ENCODE measurements at regions of chr1 and their contacts with region 1.

Region 1: GRCh38 chr1:145858894-145859490 is at the start of gene PIAS3:
- DNase-seq: peak; percentile 97
- H3K4me3 ChIP-seq: peak within 1 kb of the TSS; percentile 64 to 78 (median 71)
- H3K27ac ChIP-seq: peak within 1 kb of the TSS; percentile 43
- H3K4me1 ChIP-seq: peaks cover 7% of the 10 kb centered on the region
- H3K27me3 ChIP-seq: peaks cover 2 to 4% of the 10 kb centered on the region in 2 experiments
- CTCF ChIP-seq: no peak
- POLR2A ChIP-seq: no peak
- total RNA-seq, gene PIAS3: 50.1 and 53.3 TPM in 2 replicates

Region 2: GRCh38 chr1:145871994-145872924 is 13.3 kb after region 1 on chr1:
- CTCF ChIA-PET with region 1: interaction called, 11 read pairs
- POLR2A ChIA-PET with region 1: no interaction called
- dilution Hi-C with region 1: no loop called
- intact Hi-C with region 1: no loop called
- DNase-seq: peak; percentile 37
- H3K4me3 ChIP-seq: peak overlapping the region in 1 of 3 experiments; percentile 35
- H3K27ac ChIP-seq: no peak overlapping the region
- H3K4me1 ChIP-seq: peaks cover 8% of the 10 kb centered on the region
- H3K27me3 ChIP-seq: peaks cover 0 to 3% of the 10 kb centered on the region in 2 experiments
- CTCF ChIP-seq: no peak
- POLR2A ChIP-seq: no peak

Region 3: DNA sequence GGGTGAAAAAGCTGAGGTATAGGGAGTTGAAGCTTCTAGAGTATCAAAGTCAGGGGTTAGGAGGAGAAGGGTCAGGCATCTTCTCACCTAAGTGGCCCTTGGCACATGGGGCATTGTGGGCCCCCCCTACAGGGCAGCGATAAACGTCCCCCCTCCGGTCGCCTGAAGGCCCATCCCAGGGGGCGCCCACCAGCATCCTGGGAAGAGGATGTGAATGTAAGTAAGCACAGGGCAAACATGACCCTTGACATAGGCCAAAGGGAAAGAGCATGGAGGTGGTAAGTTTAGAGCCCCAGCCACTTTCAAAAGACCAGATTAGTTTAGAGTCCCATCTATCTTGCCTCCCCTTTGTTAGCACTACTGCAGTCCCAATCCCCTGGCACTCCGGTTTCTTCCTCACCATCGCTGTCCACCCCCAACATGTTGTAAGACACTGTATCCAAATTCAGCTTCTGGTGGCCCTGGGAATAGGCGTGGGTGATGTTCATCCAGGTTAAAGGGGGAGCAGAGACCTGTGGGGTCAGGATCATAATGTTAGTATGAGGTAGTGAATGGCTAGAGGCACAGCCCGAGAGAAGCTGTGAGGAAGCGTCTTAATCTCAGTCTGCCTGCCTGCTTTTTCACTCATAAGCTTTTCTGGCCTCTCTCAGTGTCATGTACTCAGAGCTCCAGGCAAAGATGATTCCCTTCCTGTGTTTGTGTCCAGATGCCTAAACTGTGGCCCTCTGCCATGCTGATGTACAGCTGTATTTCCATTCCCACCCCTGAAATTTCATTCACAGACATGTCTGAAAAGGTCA is 48.2 kb after region 1 on chr1:
- CTCF ChIA-PET with region 1: interaction called, 17 read pairs
- POLR2A ChIA-PET with region 1: interaction called, 9 read pairs
- dilution Hi-C with region 1: no loop called
- intact Hi-C with region 1: no loop called
- DNase-seq: peak; percentile 59
- H3K4me3 ChIP-seq: no peak overlapping the region
- H3K27ac ChIP-seq: peak overlapping the region; percentile 39
- H3K4me1 ChIP-seq: peaks cover 25% of the 10 kb centered on the region
- H3K27me3 ChIP-seq: no peaks in the 10 kb centered on the region
- CTCF ChIP-seq: no peak
- POLR2A ChIP-seq: no peak

Region 4: GRCh38 chr1:145927063-145927886 is 68.3 kb after region 1 on chr1 and contains the start of gene RBM8A:
- CTCF ChIA-PET with region 1: interaction called, 5 read pairs
- POLR2A ChIA-PET with region 1: interaction called, 10 read pairs
- dilution Hi-C with region 1: no loop called
- intact Hi-C with region 1: no loop called
- DNase-seq: peak; percentile 99
- H3K4me3 ChIP-seq: peak within 1 kb of the TSS; percentile 80 to 89 (median 80)
- H3K27ac ChIP-seq: peak within 1 kb of the TSS; percentile 94
- H3K4me1 ChIP-seq: peaks cover 8% of the 10 kb centered on the region
- H3K27me3 ChIP-seq: no peaks in the 10 kb centered on the region
- CTCF ChIP-seq: peak; percentile 64 to 70
- POLR2A ChIP-seq: peak; percentile 88
- total RNA-seq, gene RBM8A: 194 and 200 TPM in 2 replicates

Region 5: GRCh38 chr1:145963995-145964901 is 105.3 kb after region 1 on chr1 and contains the starts of genes ANKRD34A and POLR3GL:
- CTCF ChIA-PET with region 1: interaction called, 10 read pairs
- POLR2A ChIA-PET with region 1: interaction called, 10 read pairs
- dilution Hi-C with region 1: no loop called
- intact Hi-C with region 1: no loop called
- DNase-seq: peak; percentile 96
- H3K4me3 ChIP-seq: peak within 1 kb of the TSS; percentile 38 to 77 (median 60)
- H3K27ac ChIP-seq: peak within 1 kb of the TSS; percentile 43
- H3K4me1 ChIP-seq: peaks cover 34% of the 10 kb centered on the region
- H3K27me3 ChIP-seq: no peaks in the 10 kb centered on the region
- CTCF ChIP-seq: no peak
- POLR2A ChIP-seq: peak; percentile 82
- total RNA-seq, gene ANKRD34A: 0.24 and 0.60 TPM in 2 replicates
- total RNA-seq, gene POLR3GL: 15.3 and 18.8 TPM in 2 replicates

Region 6: GRCh38 chr1:145985502-145986439 is 126.8 kb after region 1 on chr1:
- CTCF ChIA-PET with region 1: no interaction called
- POLR2A ChIA-PET with region 1: no interaction called
- dilution Hi-C with region 1: no loop called
- intact Hi-C with region 1: no loop called
- DNase-seq: peak; percentile 63
- H3K4me3 ChIP-seq: no peak overlapping the region
- H3K27ac ChIP-seq: no peak overlapping the region
- H3K4me1 ChIP-seq: peaks cover 13% of the 10 kb centered on the region
- H3K27me3 ChIP-seq: no peaks in the 10 kb centered on the region
- CTCF ChIP-seq: no peak
- POLR2A ChIP-seq: no peak